ENCODE measurements at regions of chrX and their contacts with region 1.

Region 1: DNA sequence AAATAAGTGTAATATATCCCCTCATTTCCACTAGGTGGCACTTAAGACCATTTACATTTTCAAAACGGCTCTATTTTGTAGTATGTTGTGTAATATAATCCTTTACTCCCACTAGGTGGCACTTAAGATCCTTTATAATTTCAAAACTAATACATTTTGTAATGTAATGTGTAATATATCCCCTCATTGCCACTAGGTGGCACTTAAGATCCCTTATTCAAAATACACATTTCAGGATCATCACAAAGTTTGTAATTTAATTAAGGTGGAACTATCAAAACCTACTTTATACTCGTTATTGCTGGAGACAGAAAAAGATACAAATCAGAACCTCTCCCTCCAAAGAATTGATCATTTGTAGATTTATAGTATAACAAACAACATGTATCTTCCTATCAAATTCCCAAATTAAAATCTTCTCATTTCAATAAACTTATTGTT is 132.5 kb downstream of the ARHGAP6 start:
- DNase-seq: no peak
- H3K4me3 ChIP-seq: no peak overlapping the region
- H3K27ac ChIP-seq: peak overlapping the region in 1 of 2 donors; percentile 46
- H3K4me1 ChIP-seq: peaks cover 7% of the 10 kb centered on the region
- H3K27me3 ChIP-seq: no peaks in the 10 kb centered on the region
- CTCF ChIP-seq: peak; percentile 78 to 98 (median 93)
- EP300 ChIP-seq: no peak
- POLR2A ChIP-seq: no peak

Region 2: DNA sequence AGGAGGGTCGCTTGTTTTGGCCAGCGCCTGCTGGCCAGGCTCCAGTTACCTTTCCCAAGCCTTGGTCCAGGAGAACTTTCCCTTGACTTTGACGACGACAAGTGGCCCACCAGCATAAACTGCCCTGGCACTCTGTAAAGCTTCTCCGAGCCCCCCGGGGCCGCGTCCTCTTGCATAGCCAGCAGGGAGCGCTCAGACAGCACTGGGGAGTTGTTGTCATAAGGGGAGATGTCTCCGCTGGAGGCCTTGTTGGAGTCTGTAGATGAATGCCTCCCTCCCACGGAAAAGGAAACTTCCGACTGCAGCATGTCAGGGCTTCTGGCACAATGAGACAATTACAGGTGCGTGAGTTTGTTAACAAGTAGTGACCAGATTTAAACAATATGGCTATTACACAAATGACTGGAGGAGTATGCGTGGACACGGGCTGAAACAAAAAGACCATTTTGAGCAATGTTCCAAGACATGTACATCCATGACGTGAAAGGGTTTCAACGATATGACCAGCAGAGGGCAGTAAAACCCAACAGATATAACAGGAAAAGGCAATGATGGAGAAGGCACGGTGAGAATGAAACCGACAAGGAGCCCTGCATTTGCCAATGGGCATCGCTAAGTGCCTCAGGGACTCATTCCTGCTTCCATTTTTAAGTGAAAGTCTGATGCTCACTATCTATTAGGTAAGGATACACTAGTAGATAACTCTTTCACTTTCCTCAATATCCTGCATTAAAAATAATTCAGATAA is 389.1 kb before region 1 on chrX:
- intact Hi-C with region 1: loop called in 2 of 4 experiments (anchors 5 to 10 kb)
- DNase-seq: peak; percentile 31 to 69 (median 35)
- H3K4me3 ChIP-seq: no peak overlapping the region
- H3K27ac ChIP-seq: no peak overlapping the region
- H3K4me1 ChIP-seq: no peaks in the 10 kb centered on the region
- H3K27me3 ChIP-seq: no peaks in the 10 kb centered on the region
- CTCF ChIP-seq: peak; percentile 15 to 70 (median 51)
- EP300 ChIP-seq: no peak
- POLR2A ChIP-seq: no peak

Region 3: GRCh38 chrX:11351375-11352295 is 181.6 kb before region 1 on chrX:
- intact Hi-C with region 1: no loop called
- DNase-seq: peak; percentile 19 to 55 (median 47)
- H3K4me3 ChIP-seq: no peak overlapping the region
- H3K27ac ChIP-seq: peak overlapping the region in 1 of 2 donors; percentile 35
- H3K4me1 ChIP-seq: no peaks in the 10 kb centered on the region
- H3K27me3 ChIP-seq: no peaks in the 10 kb centered on the region
- CTCF ChIP-seq: no peak
- EP300 ChIP-seq: no peak
- POLR2A ChIP-seq: no peak

Region 4: DNA sequence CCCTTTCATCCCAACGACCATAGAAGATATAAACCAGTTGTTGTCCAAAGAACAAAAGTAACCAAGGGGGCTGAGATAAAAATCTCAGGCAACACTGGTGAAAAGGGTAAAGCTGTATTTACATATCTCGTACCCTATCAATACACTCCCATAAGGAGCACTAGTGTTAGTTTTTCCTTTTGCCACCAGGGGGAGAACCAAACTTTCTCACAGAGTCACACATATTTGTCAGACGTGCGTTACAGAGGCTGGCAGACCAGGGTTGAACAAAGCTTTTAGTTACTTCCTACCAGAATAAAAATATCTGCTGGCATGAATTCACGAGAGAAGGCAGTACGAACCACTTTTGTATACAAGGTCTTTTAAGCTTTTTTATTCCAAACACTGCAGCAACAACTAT is 151.8 kb before region 1 on chrX:
- intact Hi-C with region 1: loop called in 1 of 4 experiments (anchors 10 kb)
- DNase-seq: peak in 3 of 5 donors; percentile 23 to 46 (median 41)
- H3K4me3 ChIP-seq: no peak overlapping the region
- H3K27ac ChIP-seq: no peak overlapping the region
- H3K4me1 ChIP-seq: peaks cover 3% of the 10 kb centered on the region
- H3K27me3 ChIP-seq: no peaks in the 10 kb centered on the region
- CTCF ChIP-seq: peak; percentile 28 to 69 (median 51)
- EP300 ChIP-seq: no peak
- POLR2A ChIP-seq: no peak

Region 5: DNA sequence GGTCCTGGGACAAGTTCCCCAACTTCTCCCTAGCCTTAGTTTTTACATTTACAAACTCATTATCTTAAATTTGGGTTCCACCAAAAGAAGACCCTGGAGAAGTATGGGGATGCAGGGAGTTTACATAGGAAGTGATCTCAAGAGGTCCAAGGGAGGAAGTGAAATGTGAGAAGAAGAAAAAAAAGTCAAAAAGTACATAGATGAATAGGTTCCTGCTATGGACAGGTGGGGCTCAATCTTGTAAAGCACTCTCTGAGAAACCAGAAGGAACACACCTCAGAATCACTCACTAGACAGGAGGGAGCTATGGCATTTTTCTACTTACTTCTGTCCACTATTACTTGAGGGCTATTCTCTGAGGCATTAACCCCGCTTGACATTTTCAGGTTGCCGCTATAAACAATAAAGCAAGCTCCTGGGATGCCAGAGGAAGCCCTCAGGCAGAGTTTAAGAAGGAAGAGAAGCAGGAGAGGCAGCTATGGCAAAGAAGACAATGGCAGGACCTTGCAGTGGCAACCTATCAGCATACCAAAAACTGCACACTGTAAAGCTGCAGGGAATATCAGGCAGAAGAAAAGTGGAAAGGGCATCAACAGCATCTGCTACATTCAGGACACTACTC is 76.0 kb after region 1 on chrX:
- intact Hi-C with region 1: no loop called
- DNase-seq: no peak
- H3K4me3 ChIP-seq: no peak overlapping the region
- H3K27ac ChIP-seq: no peak overlapping the region
- H3K4me1 ChIP-seq: no peaks in the 10 kb centered on the region
- H3K27me3 ChIP-seq: no peaks in the 10 kb centered on the region
- CTCF ChIP-seq: no peak
- EP300 ChIP-seq: no peak
- POLR2A ChIP-seq: no peak

Region 6: DNA sequence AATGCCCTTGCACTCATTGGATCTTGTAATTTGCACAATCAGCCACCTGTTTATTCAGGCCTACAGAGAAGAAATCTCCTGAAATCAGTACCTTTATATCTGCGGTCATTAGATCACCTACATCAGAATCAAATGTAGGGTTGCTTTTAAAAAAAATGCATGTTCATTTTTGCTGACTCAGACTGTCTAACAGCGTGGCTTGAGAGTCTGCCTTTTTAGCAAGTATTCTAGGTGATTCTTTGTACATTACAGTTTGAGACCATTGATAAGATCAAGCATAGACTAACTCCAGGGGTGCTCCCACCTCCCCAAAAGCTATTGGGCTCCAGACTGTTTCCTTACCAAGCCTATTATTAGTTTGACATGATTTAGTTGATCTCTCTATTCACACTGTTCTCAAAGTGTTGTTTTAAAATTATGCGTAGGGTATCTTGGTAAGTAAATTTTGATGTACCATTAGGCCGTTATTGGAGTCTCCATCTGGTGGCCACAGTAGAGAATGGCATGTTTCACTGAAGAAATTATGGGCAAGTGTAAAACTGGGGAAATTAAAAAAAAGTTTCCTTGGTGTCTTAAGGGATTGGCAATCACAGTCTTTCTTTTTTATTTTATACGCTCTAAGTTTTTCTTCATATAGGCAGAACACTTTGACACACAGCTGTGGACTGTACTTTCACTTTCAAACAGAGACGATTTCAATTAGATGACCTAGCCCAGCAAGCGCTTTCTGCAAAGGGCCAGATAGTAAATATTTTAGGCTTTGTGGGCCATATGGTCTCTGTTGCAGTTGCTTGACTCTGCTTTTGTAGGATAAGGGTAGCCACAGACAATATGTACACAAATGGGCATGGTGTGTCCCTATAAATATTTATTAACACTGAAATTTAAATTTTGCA is 191.1 kb after region 1 on chrX:
- intact Hi-C with region 1: loop called in 1 of 4 experiments (anchors 10 kb)
- DNase-seq: peak in 2 of 5 donors; percentile 32 to 47
- H3K4me3 ChIP-seq: no peak overlapping the region
- H3K27ac ChIP-seq: no peak overlapping the region
- H3K4me1 ChIP-seq: no peaks in the 10 kb centered on the region
- H3K27me3 ChIP-seq: no peaks in the 10 kb centered on the region
- CTCF ChIP-seq: peak; percentile 48 to 76 (median 73)
- EP300 ChIP-seq: no peak
- POLR2A ChIP-seq: no peak

Region 7: GRCh38 chrX:11739776-11740175 is 206.5 kb after region 1 on chrX:
- intact Hi-C with region 1: loop called in 1 of 4 experiments (anchors 10 kb)
- DNase-seq: no peak
- H3K4me3 ChIP-seq: no peak overlapping the region
- H3K27ac ChIP-seq: no peak overlapping the region
- H3K4me1 ChIP-seq: no peaks in the 10 kb centered on the region
- H3K27me3 ChIP-seq: no peaks in the 10 kb centered on the region
- CTCF ChIP-seq: no peak
- EP300 ChIP-seq: no peak
- POLR2A ChIP-seq: no peak

Region 8: DNA sequence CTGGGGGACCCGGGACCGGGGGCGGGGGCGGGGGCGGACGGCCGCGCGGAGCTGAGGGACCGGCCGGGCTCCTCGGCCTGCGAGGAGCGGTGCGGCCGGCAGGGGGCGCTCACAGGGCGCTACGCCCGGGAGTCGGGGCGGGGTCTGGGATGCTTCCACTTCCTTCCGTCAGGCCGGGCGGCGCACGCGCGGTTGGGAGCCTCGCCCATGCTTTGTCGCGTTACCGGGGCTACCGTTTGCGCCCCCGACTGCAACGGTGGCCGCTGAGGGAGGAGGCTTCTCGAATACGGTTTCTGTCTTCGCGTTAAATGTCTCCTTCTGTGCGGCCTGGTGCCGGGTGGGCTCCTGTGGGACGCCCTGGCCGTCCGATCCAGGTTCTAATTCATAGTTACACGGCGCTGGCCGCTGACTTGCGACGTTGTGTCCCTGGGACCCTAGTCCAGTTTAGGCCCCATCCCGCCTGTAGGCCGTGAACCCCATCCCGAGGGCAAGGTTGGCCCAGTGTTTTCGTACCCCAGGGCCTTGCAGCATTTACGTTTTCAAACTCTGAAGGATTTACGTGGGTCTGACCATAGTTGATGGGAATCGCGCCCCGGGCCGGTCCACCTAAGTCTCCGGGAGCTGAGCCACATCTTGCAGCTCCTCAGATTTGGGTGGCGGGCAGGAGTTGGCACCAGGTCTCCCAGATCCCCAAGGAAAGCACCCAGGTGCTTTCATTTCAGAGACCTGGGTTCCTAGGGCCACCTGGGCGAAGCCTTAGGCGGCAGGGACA is 225.4 kb after region 1 on chrX:
- intact Hi-C with region 1: loop called in 2 of 4 experiments (anchors 5 kb)
- DNase-seq: peak; percentile 82 to 91 (median 87)
- H3K4me3 ChIP-seq: peak overlapping the region; percentile 52
- H3K27ac ChIP-seq: peak overlapping the region; percentile 68 to 83
- H3K4me1 ChIP-seq: no peaks in the 10 kb centered on the region
- H3K27me3 ChIP-seq: no peaks in the 10 kb centered on the region
- CTCF ChIP-seq: peak; percentile 19 to 65 (median 58)
- EP300 ChIP-seq: no peak
- POLR2A ChIP-seq: peak; percentile 38

Region 9: GRCh38 chrX:11881485-11882170 is 348.4 kb after region 1 on chrX:
- intact Hi-C with region 1: no loop called
- DNase-seq: no peak
- H3K4me3 ChIP-seq: no peak overlapping the region
- H3K27ac ChIP-seq: no peak overlapping the region
- H3K4me1 ChIP-seq: no peaks in the 10 kb centered on the region
- H3K27me3 ChIP-seq: no peaks in the 10 kb centered on the region
- CTCF ChIP-seq: no peak
- EP300 ChIP-seq: no peak
- POLR2A ChIP-seq: no peak

Region 10: GRCh38 chrX:11929476-11929875 is 396.2 kb after region 1 on chrX:
- intact Hi-C with region 1: no loop called
- DNase-seq: no peak
- H3K4me3 ChIP-seq: no peak overlapping the region
- H3K27ac ChIP-seq: no peak overlapping the region
- H3K4me1 ChIP-seq: no peaks in the 10 kb centered on the region
- H3K27me3 ChIP-seq: no peaks in the 10 kb centered on the region
- CTCF ChIP-seq: no peak
- EP300 ChIP-seq: no peak
- POLR2A ChIP-seq: no peak